Activated T-helper 2 cell treated with anti-CD3 and anti-CD28 coated beads, Interferon-gamma antibody, Interleukin-2, Interleukin-4, amounts not matched to agents 10 μg/mL and 5 μg/mL and 100 μg/mL, durations not matched to agents 14 hours and 24 hours and 36 hours (primary cell): ENCODE measurements at regions of chr1 and their contacts with region 1.

Region 1: DNA sequence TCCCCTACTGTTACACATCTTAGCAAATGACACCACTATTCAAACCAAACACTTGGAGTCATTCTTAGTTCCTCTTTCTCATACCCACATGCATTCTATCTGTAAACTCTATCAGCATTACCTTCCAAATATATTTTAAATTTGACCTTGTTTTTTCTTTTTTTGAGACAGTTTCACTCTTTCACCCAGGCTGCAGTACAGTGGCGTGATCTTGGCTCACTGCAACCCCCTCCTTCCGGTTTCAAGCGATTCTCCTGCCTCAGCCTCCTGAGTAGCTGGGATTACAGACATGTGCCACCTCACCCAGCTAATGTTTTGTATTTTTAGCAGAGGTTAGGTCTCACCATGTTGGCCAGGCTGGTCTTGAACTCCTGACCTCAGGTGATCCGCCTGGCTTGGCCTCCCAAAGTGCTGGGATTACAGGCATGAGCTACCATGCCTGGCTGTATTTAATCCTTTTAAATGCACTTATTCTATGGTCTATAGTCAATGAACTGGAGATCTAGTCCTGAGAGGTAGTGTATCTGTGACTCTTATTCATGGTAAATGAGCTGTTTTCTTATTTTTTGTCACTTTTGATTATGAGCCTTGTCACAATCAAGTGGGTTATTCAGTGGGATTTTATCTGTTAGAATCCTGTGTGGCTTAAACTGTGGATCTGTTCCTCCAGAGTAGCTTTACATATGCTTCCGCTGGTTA is 73.1 kb downstream of the GATAD2B start:
- DNase-seq: no peak
- H3K4me3 Mint-ChIP-seq: peak overlapping the region; percentile 17
- H3K27ac Mint-ChIP-seq: peak overlapping the region; percentile 91
- H3K4me1 Mint-ChIP-seq: peaks cover 21% of the 10 kb centered on the region
- H3K27me3 Mint-ChIP-seq: no peaks in the 10 kb centered on the region

Region 2: GRCh38 chr1:153805042-153805745 is 44.4 kb before region 1 on chr1:
- intact Hi-C with region 1: loop called (anchors 1 kb)
- DNase-seq: peak; percentile 55
- H3K4me3 Mint-ChIP-seq: peak overlapping the region; percentile 24
- H3K27ac Mint-ChIP-seq: peak overlapping the region; percentile 77
- H3K4me1 Mint-ChIP-seq: peaks cover 24% of the 10 kb centered on the region
- H3K27me3 Mint-ChIP-seq: no peaks in the 10 kb centered on the region

Region 3: GRCh38 chr1:153888533-153888932 is 38.9 kb after region 1 on chr1:
- intact Hi-C with region 1: loop called (anchors 5 kb)
- DNase-seq: no peak
- H3K4me3 Mint-ChIP-seq: peak overlapping the region; percentile 31
- H3K27ac Mint-ChIP-seq: peak overlapping the region; percentile 46
- H3K4me1 Mint-ChIP-seq: peaks cover 19% of the 10 kb centered on the region
- H3K27me3 Mint-ChIP-seq: no peaks in the 10 kb centered on the region

Region 4: GRCh38 chr1:154479764-154480421 is 630.3 kb after region 1 on chr1:
- intact Hi-C with region 1: no loop called
- DNase-seq: peak; percentile 56
- H3K4me3 Mint-ChIP-seq: no peak overlapping the region
- H3K27ac Mint-ChIP-seq: no peak overlapping the region
- H3K4me1 Mint-ChIP-seq: peaks cover 18% of the 10 kb centered on the region
- H3K27me3 Mint-ChIP-seq: peaks cover 5% of the 10 kb centered on the region